ENCODE measurements at regions of chr6 and their contacts with region 1.

Region 1: DNA sequence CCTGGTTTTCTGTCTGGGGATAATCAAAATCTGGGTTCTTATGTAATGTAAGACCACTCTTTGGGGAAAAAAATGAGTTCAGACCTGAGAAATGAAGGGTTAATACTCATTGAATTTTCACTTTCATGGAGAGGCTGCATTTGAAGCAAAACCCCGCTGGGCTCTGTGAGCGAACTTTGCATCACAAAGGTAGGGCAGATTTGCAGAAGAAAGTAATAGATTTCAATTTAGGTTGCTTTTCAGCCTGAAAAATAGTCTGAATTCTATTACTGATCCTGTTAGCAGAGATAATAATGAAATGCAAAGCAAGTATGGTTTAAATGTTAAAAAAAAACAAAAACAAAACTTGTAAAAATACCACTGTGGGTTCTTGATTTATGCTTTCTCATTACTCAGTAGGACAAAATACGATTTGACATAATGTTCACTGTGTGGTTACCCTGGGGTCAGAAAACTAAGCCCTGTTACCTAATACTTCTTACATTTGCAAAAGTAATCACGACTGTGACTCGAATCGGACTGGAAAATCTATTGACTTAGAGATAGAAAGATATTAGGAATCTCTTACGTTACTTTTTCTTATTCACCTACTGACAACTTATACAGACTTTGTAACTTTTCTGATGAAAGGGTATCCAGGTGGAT is 72.2 kb downstream of the UST start:
- DNase-seq: no peak
- ATAC-seq: no peak
- H3K4me3 Mint-ChIP-seq: no peak overlapping the region
- H3K27ac Mint-ChIP-seq: no peak overlapping the region
- H3K4me1 Mint-ChIP-seq: peaks cover 30% of the 10 kb centered on the region
- H3K27me3 Mint-ChIP-seq: no peaks in the 10 kb centered on the region
- CTCF ChIP-seq: no peak

Region 2: GRCh38 chr6:148800535-148800934 is 18.5 kb before region 1 on chr6:
- CTCF ChIA-PET with region 1: no interaction called
- POLR2A ChIA-PET with region 1: no interaction called
- intact Hi-C with region 1: loop called (anchors 2 kb)
- DNase-seq: no peak
- ATAC-seq: no peak
- H3K4me3 Mint-ChIP-seq: no peak overlapping the region
- H3K27ac Mint-ChIP-seq: no peak overlapping the region
- H3K4me1 Mint-ChIP-seq: peaks cover 61% of the 10 kb centered on the region
- H3K27me3 Mint-ChIP-seq: no peaks in the 10 kb centered on the region
- CTCF ChIP-seq: no peak